Activated CD4-positive, alpha-beta T cell treated with anti-CD3 and anti-CD28 coated beads for 36 hours (primary cell): ENCODE measurements at regions of chr15 and their contacts with region 1.

Region 1: GRCh38 chr15:23616536-23616935 is 31.1 kb downstream of the MAGEL2 start:
- DNase-seq: no peak
- ATAC-seq: no peak
- H3K4me3 Mint-ChIP-seq: no peak overlapping the region
- H3K27ac Mint-ChIP-seq: no peak overlapping the region
- H3K4me1 Mint-ChIP-seq: no peaks in the 10 kb centered on the region
- H3K27me3 Mint-ChIP-seq: no peaks in the 10 kb centered on the region

Region 2: GRCh38 chr15:23564821-23565394 is 51.6 kb before region 1 on chr15:
- CTCF ChIA-PET with region 1: no interaction called
- POLR2A ChIA-PET with region 1: no interaction called
- intact Hi-C with region 1: loop called in 1 of 2 experiments (anchors 5 kb)
- DNase-seq: no peak
- ATAC-seq: no peak
- H3K4me3 Mint-ChIP-seq: peak overlapping the region; percentile 68
- H3K27ac Mint-ChIP-seq: peak overlapping the region; percentile 38
- H3K4me1 Mint-ChIP-seq: no peaks in the 10 kb centered on the region
- H3K27me3 Mint-ChIP-seq: peaks cover 8% of the 10 kb centered on the region